A673 (cell line): ENCODE measurements at regions of chr14 and their contacts with region 1.

Region 1: DNA sequence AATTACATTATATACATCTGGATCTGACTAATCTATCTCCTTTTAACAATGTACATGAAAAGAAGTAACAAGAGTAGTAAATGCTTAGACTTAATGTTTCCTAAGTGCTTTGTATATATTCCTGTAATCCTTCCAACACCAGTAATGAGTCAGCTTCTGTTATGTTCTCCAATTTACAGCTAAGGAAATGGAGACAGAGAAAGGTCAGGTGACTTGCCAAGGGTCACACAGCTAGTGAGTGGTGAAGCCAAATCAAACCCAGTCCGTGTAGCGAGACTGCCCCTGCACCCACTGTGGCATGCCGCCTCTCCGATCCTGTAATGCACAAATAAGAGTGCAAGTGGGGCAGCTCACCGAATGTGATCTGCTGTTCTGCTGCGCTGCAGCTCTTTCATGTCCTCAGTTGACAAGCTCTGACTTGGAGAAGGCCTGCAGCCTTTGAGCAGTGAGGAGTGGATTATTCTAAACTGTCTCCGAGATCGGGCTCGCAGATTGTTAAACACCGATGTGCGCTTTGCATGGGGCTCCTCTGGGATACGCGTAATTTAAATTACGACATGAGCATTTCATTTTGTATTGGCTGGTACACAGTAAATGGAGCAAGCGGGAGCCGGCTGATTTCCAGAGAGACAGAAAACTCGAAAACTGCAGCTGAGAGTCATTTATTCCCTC is 65.1 kb upstream of the KTN1 start:
- DNase-seq: peak; percentile 88
- H3K4me3 ChIP-seq: peak overlapping the region; percentile 26
- H3K27ac ChIP-seq: peak overlapping the region; percentile 41
- H3K4me1 ChIP-seq: peaks cover 13% of the 10 kb centered on the region
- H3K27me3 ChIP-seq: no peaks in the 10 kb centered on the region
- CTCF ChIP-seq: no peak

Region 2: GRCh38 chr14:55454264-55455002 is 60.5 kb before region 1 on chr14:
- CTCF ChIA-PET with region 1: no interaction called
- POLR2A ChIA-PET with region 1: no interaction called
- intact Hi-C with region 1: loop called (anchors 5 kb)
- DNase-seq: peak; percentile 98
- H3K4me3 ChIP-seq: no peak overlapping the region
- H3K27ac ChIP-seq: peak overlapping the region; percentile 72
- H3K4me1 ChIP-seq: peaks cover 27% of the 10 kb centered on the region
- H3K27me3 ChIP-seq: no peaks in the 10 kb centered on the region
- CTCF ChIP-seq: no peak

Region 3: DNA sequence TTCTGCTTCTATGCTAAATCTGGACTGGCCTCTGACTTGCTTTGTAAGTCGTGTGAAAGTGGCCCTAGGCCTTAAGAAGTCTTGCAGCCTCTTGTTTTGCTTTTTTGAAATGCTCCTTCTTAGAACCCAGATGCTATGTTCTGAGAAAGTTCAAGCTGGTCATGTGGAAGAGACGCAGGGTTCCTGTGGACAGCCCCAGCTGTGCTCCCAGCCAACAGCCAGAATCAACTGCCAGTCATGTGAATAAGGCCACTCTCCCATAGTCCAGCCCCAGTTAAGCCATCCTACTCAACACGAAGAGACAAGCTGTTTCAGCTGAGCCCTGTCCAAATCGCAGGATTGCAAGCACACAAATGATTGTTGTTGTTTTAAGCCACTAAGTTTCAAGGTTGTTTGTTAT is 37.3 kb before region 1 on chr14:
- CTCF ChIA-PET with region 1: no interaction called
- POLR2A ChIA-PET with region 1: no interaction called
- intact Hi-C with region 1: no loop called
- DNase-seq: no peak
- H3K4me3 ChIP-seq: no peak overlapping the region
- H3K27ac ChIP-seq: no peak overlapping the region
- H3K4me1 ChIP-seq: peaks cover 5% of the 10 kb centered on the region
- H3K27me3 ChIP-seq: no peaks in the 10 kb centered on the region
- CTCF ChIP-seq: no peak